Psoas muscle (tissue), 8 donors: ENCODE measurements at regions of chr17 and their contacts with region 1.

Region 1: DNA sequence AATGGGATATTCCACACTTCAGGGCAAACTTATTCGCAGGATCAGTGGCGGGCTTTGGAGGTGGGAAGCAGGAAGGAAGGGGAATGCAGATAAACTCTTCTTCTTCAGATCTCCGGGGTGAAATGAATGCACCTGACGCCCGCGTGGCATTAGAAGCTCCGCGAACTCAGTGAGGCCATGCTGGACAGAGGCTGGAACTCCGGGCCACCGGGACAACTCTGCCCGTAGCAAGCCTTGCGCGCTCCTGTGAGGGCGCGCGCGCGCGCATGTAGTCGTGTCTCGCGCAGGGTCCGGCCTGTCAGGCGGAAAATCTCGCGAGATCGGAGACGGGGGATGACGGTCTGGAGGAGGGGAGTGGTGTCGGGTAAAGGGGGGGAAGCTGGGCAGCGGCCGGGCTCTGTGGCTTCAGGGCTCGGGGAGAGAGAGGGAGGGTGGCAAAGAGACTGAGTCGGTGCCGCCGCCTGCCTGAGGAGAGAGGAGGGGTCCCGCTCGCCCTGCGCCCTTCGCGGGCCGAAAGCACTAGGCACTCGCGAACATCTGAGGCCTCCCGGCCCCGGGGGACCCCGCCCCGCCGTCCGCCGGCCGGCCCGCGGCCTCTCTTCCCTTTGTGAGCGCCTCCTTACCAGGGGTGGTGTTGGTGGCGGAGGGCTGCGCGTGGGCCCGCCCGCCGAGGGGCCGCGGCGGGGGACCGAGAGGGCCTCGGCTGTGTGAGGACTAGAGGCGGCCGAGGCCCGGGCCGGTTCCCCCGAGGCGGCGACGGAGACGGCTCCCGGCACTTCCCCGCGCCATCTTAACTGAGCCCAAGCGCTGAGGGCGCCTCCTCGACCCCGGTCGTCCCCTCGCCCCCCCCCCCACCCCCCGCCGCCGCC is at the start of gene TAOK1:
- DNase-seq: peak; percentile 99 to 100
- ATAC-seq: peak; percentile 97 to 99 (median 98)
- H3K4me3 ChIP-seq: peak within 1 kb of the TSS; percentile 99
- H3K27ac ChIP-seq: peak within 1 kb of the TSS; percentile 99
- H3K4me1 ChIP-seq: peaks cover 43% of the 10 kb centered on the region
- H3K27me3 ChIP-seq: no peaks in the 10 kb centered on the region
- CTCF ChIP-seq: no peak
- total RNA-seq, gene TAOK1: 42.5 to 49.8 (median 46.5) TPM

Region 2: GRCh38 chr17:29451121-29451742 is 61.0 kb after region 1 on chr17:
- intact Hi-C with region 1: loop called in 1 of 2 experiments (anchors 10 kb)
- DNase-seq: no peak
- ATAC-seq: peak; percentile 57 to 82 (median 69)
- H3K4me3 ChIP-seq: no peak overlapping the region
- H3K27ac ChIP-seq: peak overlapping the region; percentile 50
- H3K4me1 ChIP-seq: peaks cover 35% of the 10 kb centered on the region
- H3K27me3 ChIP-seq: no peaks in the 10 kb centered on the region
- CTCF ChIP-seq: no peak

Region 3: DNA sequence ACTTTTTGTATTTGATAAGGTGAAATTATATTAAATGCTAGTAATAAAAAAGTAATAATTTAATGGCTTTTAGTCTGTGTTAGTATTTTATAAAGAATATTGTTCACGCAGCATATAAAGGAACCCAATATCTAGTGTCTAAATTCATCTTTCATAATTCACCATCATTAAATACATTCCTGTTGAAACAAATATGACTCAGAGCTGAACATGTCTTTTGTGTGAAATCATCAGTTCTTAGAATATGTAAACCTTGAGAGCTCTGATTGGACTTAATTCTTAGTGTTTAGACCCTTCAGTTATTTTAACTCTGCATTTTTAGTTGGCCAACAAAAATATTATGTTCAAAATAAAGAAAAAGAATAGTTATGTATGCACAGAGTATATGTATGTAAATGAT is 104.8 kb after region 1 on chr17:
- intact Hi-C with region 1: no loop called
- DNase-seq: no peak
- ATAC-seq: no peak
- H3K4me3 ChIP-seq: no peak overlapping the region
- H3K27ac ChIP-seq: no peak overlapping the region
- H3K4me1 ChIP-seq: no peaks in the 10 kb centered on the region
- H3K27me3 ChIP-seq: no peaks in the 10 kb centered on the region
- CTCF ChIP-seq: no peak